Cardiac septum (tissue), 1 donor: ENCODE measurements at regions of chr11 and their contacts with region 1.

Region 1: DNA sequence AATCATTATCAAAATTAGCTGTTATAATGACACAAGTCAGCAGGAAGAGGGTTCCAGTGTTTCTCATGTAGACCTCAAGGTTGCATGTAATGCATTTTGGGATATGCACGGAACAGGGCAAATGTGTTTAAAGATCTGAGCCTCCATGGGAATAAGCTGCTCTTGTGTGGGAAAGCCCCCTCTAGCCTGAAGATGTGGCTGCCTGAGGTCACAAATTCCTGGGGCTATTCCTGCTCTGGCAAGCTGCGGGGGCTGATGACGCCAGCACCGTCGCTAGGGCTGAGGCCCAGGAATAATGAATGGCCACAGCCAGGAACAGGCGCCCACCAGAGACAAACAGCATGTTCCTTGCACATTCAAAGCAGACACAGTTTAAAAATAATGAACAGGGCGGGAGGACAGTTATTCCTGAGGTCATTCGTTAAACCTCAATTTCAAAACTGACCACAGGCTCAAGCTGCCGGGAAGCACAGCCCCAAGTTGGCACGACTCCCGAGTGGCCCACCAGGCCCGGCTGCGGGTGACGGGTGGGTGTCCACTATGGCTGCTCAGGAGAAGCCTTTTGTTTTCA is 11.7 kb downstream of the OSBPL5 start:
- DNase-seq: no peak

Region 2: DNA sequence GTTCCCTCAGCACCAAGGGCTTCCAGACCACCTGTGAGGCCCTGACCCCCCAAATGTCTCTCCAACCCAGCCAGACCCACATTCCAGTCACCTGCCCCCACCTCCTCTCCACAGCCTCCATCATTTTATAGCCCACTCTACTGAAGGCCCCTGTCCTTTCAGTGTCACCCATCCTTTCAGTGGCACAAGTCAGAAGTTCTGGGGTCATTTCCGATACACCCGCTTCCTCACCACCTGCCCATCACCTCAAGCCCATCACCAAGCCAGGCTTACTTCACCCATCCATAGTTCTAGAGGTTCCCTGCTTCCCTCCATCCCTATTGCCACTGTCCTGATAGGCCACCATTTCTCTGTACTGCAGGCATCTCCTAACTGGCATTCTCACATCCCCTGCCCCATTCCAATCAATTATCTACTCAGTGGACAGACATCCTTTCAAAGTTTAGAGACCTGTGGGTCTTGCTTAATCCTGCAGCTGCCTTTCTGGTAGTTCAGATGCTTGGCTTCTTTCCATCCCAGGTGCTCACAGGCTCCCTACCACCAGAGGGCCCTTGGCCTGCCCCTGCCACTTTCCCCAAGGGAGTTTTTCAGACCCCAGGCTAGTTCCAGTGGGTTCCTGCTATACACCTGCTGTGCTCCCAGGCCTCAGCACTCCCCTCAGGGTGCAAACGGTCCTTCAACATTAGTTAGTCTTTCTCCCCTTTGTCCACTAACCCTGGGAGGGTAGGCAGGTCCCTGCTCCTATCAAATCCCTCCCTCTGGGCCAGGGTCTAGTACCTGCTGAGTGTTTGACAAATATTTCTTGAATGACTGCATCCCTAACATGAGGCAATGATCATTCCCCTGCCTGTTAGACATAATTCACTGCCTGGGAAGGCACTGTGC is 461.1 kb before region 1 on chr11:
- intact Hi-C with region 1: no loop called
- DNase-seq: peak; percentile 55

Region 3: DNA sequence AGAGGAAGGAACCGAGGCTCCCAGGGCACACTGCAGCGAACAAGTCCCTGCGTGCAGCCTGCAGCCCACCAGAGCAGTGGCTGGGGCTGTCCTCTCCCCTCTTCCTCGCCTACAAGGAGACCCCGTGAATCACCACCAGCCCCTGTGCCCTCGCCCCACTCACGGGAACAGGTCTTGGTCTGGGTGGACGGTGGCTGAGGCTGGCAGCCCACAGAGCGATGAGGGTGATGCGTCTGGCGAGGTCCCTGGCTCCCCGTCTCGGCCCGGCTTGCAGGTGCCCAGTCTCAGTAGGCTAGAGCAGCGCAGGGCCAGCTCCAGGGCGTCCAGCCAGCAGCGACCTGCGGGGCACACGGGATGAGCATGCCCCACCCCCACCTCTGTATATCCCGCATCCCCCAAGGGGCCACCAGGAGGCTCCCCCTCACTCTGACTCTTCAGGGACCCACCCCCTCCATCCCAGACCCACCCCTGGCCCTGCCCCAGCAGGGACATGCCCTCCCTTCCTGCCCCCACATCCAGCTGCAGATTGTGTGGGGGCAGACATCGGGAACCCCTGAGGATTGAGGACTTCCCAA is 45.7 kb before region 1 on chr11:
- intact Hi-C with region 1: no loop called
- DNase-seq: peak; percentile 71

Region 4: GRCh38 chr11:3119141-3119821 is 34.1 kb before region 1 on chr11:
- intact Hi-C with region 1: loop called (anchors 5 kb)
- DNase-seq: no peak

Region 5: DNA sequence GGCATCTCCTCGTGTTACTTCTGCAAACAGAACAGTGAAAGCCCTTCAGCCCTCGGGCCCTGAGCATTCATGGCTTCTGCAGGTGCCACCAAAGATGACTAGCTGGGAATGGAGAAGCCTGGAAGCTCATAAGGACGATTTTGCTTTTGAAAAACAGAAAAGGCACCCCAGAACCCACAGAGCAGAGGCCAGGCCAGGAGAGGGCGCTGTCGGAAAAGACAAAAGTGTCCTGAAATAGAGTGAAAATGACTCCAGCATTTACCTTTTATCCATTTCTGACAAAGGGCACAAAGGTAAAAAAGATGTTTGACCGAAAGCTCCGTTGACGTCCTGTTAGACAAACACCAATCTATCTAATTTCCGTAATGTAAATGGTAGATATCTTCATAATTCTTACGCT is 187.9 kb after region 1 on chr11:
- intact Hi-C with region 1: no loop called
- DNase-seq: no peak

Region 6: GRCh38 chr11:3434976-3435375 is 281.6 kb after region 1 on chr11:
- intact Hi-C with region 1: no loop called
- DNase-seq: peak; percentile 57